Activated CD8-positive, alpha-beta T cell treated with anti-CD3 and anti-CD28 coated beads, Interleukin-2, amount 10 ng/mL, durations not matched to agents 7 days and 5 days (primary cell): ENCODE measurements at regions of chr2 and their contacts with region 1.

Region 1: DNA sequence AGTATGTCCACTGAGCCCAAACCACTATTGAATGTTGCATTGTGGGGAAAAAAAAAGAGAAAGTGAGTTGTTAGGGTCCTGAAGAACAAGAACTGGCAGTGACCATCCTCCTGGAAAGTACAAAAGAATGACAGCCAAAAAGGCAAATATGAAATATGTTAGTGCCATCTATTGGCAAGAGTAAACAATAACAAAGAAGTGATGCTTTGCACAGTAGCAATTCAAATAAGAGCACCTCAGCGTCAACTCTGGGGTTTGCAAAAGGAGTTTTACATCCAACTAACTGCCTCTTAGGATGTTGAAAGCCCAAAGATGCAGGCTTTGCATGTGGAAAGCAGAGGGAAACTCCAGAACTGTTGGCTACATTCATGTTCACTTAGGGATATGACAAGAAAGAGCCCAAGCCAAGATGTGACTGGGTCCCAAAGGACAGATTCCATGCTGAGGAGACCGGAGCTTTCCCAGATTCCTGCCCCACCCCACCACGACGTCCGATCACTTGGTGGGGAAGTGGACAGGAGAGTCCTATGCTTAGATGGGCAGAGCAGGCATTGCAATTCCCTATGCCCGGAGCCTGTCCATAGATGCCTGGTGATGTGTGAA is 15.6 kb downstream of the TRABD2A start:
- DNase-seq: peak; percentile 27
- ATAC-seq: peak; percentile 61
- H3K4me3 Mint-ChIP-seq: no peak overlapping the region
- H3K27ac Mint-ChIP-seq: peak overlapping the region; percentile 75
- H3K4me1 Mint-ChIP-seq: peaks cover 82% of the 10 kb centered on the region
- H3K27me3 Mint-ChIP-seq: no peaks in the 10 kb centered on the region

Region 2: GRCh38 chr2:84840306-84840705 is 25.0 kb before region 1 on chr2:
- CTCF ChIA-PET with region 1: interaction called, 18 read pairs
- POLR2A ChIA-PET with region 1: interaction called, 4 read pairs
- DNase-seq: no peak
- ATAC-seq: peak; percentile 42
- H3K4me3 Mint-ChIP-seq: peak overlapping the region; percentile 54
- H3K27ac Mint-ChIP-seq: peak overlapping the region; percentile 71
- H3K4me1 Mint-ChIP-seq: peaks cover 60% of the 10 kb centered on the region
- H3K27me3 Mint-ChIP-seq: no peaks in the 10 kb centered on the region